Dorsolateral prefrontal cortex (tissue), 120 donors: ENCODE measurements at regions of chr7 and their contacts with region 1.

Region 1: GRCh38 chr7:64618785-64619456 is 47.0 kb upstream of the ZNF107 start:
- DNase-seq: no peak
- H3K4me3 ChIP-seq: peak overlapping the region in 2 of 59 donors; percentile 17 to 27
- H3K27ac ChIP-seq: no peak overlapping the region
- H3K27me3 ChIP-seq: no peaks in the 10 kb centered on the region
- CTCF ChIP-seq: peak; percentile 49 to 90 (median 69)

Region 2: GRCh38 chr7:64183126-64183742 is 435.7 kb before region 1 on chr7:
- intact Hi-C with region 1: loop called (anchors 2 kb)
- DNase-seq: peak in 2 of 10 donors; percentile 38 to 41
- H3K4me3 ChIP-seq: peak overlapping the region in 1 of 59 donors; percentile 23
- H3K27ac ChIP-seq: no peak overlapping the region
- H3K27me3 ChIP-seq: peaks cover 0 to 45% (median 16%) of the 10 kb centered on the region in 45 donors
- CTCF ChIP-seq: peak; percentile 43 to 88 (median 77)